SK-N-SH (cell line): ENCODE measurements at regions of chr5 and their contacts with region 1.

Region 1: DNA sequence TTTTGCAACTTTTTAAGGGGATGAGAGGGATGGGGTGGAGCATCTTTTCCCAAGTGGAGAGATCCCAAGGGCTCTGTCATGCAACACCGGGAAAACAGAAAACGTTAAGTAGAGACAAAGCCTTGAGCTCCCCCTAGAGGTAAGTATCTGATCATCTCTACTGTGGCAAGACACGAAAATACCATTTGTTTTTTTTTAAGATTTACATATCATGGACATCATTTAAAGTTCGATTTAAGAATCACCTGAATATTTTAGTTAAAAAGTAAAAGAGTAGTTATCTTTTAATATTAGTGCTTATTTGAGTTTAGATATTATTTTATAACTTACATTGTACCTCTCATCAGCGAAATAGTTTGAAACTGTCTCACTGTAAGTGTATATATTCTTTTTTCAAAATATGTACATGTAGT is 200.4 kb downstream of the LRRC70 start:
- DNase-seq: peak; percentile 77
- H3K4me3 ChIP-seq: no peak overlapping the region
- H3K27ac ChIP-seq: no peak overlapping the region
- H3K4me1 ChIP-seq: no peaks in the 10 kb centered on the region
- H3K27me3 ChIP-seq: no peaks in the 10 kb centered on the region
- CTCF ChIP-seq: peak; percentile 80
- EP300 ChIP-seq: no peak
- RAD21 ChIP-seq: peak; percentile 86

Region 2: GRCh38 chr5:62450259-62450658 is 328.8 kb before region 1 on chr5:
- CTCF ChIA-PET with region 1: interaction called, 30 read pairs
- POLR2A ChIA-PET with region 1: no interaction called
- DNase-seq: no peak
- H3K4me3 ChIP-seq: no peak overlapping the region
- H3K27ac ChIP-seq: no peak overlapping the region
- H3K4me1 ChIP-seq: no peaks in the 10 kb centered on the region
- H3K27me3 ChIP-seq: no peaks in the 10 kb centered on the region
- CTCF ChIP-seq: no peak
- EP300 ChIP-seq: no peak
- RAD21 ChIP-seq: no peak

Region 3: GRCh38 chr5:62465985-62466925 is 312.8 kb before region 1 on chr5:
- CTCF ChIA-PET with region 1: interaction called, 23 read pairs
- POLR2A ChIA-PET with region 1: no interaction called
- DNase-seq: no peak
- H3K4me3 ChIP-seq: no peak overlapping the region
- H3K27ac ChIP-seq: peak overlapping the region in 1 of 2 experiments; percentile 27; a peak in 1 of 4 replicates
- H3K4me1 ChIP-seq: peaks cover 4 to 10% of the 10 kb centered on the region in 2 experiments; a peak in 2 of 4 replicates
- H3K27me3 ChIP-seq: no peaks in the 10 kb centered on the region
- CTCF ChIP-seq: no peak
- EP300 ChIP-seq: no peak
- RAD21 ChIP-seq: no peak